Activated CD8-positive, alpha-beta T cell treated with anti-CD3 and anti-CD28 coated beads, Interleukin-2, amount 10 ng/mL, durations not matched to agents 7 days and 5 days (primary cell): ENCODE measurements at regions of chr1 and their contacts with region 1.

Region 1: GRCh38 chr1:235011599-235012435 is 116.8 kb downstream of the TOMM20 start:
- DNase-seq: peak; percentile 98
- ATAC-seq: peak; percentile 97
- H3K4me3 Mint-ChIP-seq: peak overlapping the region; percentile 74
- H3K27ac Mint-ChIP-seq: peak overlapping the region; percentile 99
- H3K4me1 Mint-ChIP-seq: peaks cover 86% of the 10 kb centered on the region
- H3K27me3 Mint-ChIP-seq: no peaks in the 10 kb centered on the region

Region 2: DNA sequence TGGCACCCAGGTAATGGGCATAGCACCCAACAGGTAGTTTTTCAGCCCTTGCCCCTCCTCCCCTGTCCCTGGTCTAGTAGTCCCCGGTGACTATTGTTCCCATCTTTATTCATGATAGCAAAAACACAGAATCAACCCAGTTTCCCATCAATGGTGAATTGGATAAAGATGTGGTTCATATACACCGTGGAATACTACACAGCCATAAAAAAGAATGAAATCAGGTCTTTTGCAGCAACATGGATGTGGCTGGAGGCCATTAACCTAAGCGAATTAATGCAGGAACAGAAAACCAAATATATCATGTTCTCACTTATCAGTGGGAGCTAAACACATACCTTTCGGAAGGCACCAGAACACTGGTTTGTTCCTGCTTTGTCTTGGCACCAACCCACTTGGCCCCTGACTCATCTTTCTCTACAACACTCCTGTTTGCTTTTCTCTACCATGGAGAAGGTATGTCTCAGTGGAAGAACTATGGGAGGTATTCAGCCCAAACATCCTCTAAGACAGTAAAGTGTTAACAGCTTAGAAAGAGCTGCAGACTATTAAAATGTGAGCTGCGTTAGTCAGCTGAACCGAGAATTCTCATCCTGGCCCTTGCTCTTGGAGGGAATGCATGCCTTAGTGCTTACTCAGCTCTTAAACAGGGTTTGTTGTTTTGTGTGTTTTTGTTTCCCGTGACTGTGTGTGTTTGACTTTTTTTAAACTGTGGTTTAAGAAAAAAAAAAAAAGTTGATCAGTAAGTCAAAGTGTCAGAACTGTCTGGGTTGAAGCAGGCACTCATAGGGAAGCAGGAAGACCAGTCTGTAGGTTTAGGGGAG is 86.2 kb before region 1 on chr1:
- CTCF ChIA-PET with region 1: interaction called, 4 read pairs
- POLR2A ChIA-PET with region 1: interaction called, 18 read pairs
- DNase-seq: no peak
- ATAC-seq: peak; percentile 17
- H3K4me3 Mint-ChIP-seq: peak overlapping the region; percentile 59
- H3K27ac Mint-ChIP-seq: peak overlapping the region; percentile 90
- H3K4me1 Mint-ChIP-seq: peaks cover 61% of the 10 kb centered on the region
- H3K27me3 Mint-ChIP-seq: no peaks in the 10 kb centered on the region

Region 3: DNA sequence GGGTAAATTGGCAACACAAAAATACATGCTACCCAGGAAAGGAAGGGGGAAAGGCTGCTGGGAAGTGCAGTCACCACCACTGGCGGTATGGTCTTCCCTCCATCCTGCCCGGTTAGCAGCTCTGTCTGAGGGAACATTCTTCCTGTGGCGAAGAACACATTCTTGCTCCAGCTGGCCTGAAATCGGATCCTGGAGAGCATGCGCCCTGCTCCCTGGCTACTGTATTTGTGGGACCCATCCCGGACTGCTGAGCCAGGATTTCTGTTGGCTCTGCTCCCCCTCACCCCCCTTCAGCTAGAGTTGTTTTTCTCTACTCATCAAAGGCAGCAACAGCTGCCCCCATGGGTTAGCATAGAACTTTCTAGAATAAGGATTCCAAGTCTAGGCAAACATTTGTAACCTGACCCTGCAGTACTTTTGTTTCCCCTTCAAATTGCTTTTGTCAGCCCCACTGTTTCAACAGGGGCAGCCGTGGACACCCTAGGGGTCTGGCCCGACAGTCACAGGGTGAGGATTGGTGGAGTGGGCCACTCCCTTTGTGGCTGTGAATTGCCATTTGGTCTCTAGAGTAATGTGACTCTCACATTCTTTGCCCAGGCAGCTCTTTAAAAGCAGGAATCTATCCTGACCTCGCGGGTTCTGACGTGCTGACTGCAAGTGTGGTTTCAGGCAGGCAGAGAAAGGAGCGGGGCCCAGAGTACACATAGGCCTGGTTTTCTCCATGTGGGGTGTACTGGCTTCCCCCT is 40.9 kb before region 1 on chr1:
- CTCF ChIA-PET with region 1: no interaction called
- POLR2A ChIA-PET with region 1: interaction called, 11 read pairs
- DNase-seq: no peak
- ATAC-seq: peak; percentile 22
- H3K4me3 Mint-ChIP-seq: no peak overlapping the region
- H3K27ac Mint-ChIP-seq: peak overlapping the region; percentile 3
- H3K4me1 Mint-ChIP-seq: peaks cover 56% of the 10 kb centered on the region
- H3K27me3 Mint-ChIP-seq: no peaks in the 10 kb centered on the region

Region 4: DNA sequence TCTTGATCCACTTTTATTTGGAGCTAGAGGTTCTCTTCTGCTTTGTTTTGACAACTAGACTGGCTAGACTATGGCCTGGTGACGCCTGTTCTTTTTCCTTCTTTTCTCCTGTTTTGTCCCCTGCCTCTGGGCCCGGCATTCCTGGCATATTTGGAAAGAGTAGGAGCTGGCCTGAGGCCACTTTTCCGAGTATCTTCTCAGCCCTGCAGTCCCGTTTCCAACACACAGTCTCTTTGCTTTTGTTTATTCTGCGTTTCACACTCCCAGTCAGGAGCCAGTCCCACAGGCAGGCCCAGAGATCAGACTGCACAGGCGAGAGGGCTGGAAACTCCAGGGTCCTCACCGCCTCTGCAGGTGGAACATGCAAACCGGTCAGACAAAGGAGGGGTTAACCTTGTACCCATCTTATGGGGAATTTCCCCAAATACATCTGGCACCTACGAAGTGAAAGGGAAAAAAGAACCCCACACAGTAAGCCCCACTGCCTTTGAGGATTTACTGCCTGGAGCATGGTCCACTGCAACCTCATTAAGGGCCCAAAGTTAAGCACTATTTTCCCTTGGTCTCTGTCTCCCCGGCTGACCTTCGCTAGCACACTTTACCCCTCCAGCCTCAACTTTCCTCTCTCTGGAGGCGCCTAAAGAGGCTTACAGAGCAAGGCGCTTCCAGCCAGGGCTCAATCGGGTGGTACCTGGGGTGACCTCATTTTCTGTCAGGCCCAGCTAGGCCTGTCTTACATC is 24.2 kb before region 1 on chr1:
- CTCF ChIA-PET with region 1: interaction called, 14 read pairs
- POLR2A ChIA-PET with region 1: interaction called, 9 read pairs
- DNase-seq: no peak
- ATAC-seq: peak; percentile 22
- H3K4me3 Mint-ChIP-seq: no peak overlapping the region
- H3K27ac Mint-ChIP-seq: peak overlapping the region; percentile 9
- H3K4me1 Mint-ChIP-seq: peaks cover 68% of the 10 kb centered on the region
- H3K27me3 Mint-ChIP-seq: no peaks in the 10 kb centered on the region

Region 5: DNA sequence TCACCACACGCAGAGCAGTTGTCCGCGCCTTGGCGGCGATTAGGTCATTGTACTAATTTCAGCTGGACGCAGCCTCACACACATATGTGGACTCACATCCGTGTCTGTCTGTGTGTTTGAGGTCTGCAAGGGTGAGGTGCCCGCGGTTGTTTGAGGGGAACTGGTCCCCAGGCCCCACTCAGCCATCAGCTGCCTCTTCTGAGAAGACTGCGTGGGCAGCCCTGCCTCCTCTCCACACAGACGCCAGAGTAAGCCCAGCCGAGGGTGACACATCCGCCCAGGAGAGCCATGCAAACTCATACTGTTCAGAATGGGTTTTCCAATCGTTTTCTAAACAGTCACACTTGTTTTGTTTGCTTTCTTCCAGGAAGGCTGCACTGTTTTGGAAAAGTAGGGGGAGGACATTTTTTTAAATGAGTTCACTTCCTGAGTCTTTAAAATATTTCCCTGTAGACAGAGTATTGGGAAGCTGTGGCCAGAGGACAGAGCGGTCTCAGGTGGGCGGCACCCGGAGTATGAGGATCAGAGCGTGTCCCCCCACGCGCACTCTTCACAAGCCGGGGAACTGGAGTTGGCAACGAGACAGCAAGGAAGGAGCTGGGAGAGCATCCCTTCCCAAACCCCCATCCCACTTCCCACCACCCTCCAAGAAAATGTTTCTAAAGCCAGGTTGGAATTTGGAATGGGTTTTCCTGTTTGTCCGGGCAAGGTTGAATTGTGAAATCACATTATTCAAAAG is 63.5 kb after region 1 on chr1:
- CTCF ChIA-PET with region 1: no interaction called
- POLR2A ChIA-PET with region 1: interaction called, 17 read pairs
- DNase-seq: peak; percentile 43
- ATAC-seq: peak; percentile 67
- H3K4me3 Mint-ChIP-seq: no peak overlapping the region
- H3K27ac Mint-ChIP-seq: peak overlapping the region; percentile 63
- H3K4me1 Mint-ChIP-seq: peaks cover 37% of the 10 kb centered on the region
- H3K27me3 Mint-ChIP-seq: no peaks in the 10 kb centered on the region